Activated CD4-positive, alpha-beta T cell treated with anti-CD3 and anti-CD28 coated beads for 36 hours (primary cell): ENCODE measurements at regions of chr15 and their contacts with region 1.

Region 1: DNA sequence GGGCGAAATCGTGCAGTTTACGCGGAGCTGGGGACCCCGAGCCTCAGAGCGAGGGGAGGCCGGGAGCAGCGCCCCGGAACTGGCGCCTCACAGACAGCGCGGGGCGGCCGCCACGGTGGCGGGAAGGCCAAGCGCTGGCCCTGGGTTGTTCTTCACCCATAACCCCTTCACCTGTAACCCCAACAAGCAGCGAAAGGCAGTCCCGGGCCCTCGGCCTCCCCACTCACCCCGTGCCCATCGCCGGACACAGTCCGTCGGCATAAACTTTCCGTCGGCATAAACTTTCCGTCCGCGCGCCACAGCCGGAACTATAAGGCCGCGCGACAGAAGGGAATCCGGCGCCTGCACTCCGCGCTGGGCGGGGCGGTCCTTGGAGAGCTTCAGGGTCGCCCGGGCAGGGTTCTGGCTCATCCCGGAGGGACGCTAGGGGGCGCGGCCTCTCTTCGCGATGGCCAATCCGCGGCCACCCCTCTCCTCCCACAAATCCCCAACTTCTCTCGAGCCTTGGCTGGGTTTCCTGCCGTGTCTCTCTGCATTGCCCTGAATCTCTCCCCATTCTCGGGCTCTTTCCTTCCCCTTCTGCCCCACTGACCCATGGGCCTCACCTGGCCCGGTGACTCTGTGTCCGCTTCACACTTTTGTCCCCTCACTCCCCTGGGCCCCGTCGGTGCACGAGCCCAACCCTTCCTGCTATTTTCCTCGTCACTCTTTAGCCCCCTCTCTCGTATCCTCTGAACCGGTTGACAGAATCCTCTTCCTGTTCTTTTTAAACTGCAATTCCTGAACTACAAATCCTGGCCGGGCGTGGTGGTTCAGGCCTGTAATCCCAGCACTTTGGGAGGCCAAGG is at the start of gene INTS14:
- DNase-seq: peak; percentile 98
- ATAC-seq: peak; percentile 99
- H3K4me3 Mint-ChIP-seq: peak within 1 kb of the TSS; percentile 97
- H3K27ac Mint-ChIP-seq: peak within 1 kb of the TSS; percentile 96
- H3K4me1 Mint-ChIP-seq: peaks cover 33% of the 10 kb centered on the region
- H3K27me3 Mint-ChIP-seq: no peaks in the 10 kb centered on the region
- total RNA-seq, gene INTS14: 49.2 to 59.8 TPM

Region 2: GRCh38 chr15:65184868-65185738 is 426.0 kb before region 1 on chr15 and contains the start of gene CLPX:
- CTCF ChIA-PET with region 1: no interaction called
- POLR2A ChIA-PET with region 1: interaction called, 3 read pairs
- intact Hi-C with region 1: loop called in 1 of 2 experiments (anchors 1 kb)
- DNase-seq: peak; percentile 95
- ATAC-seq: peak; percentile 93
- H3K4me3 Mint-ChIP-seq: peak within 1 kb of the TSS; percentile 92
- H3K27ac Mint-ChIP-seq: peak within 1 kb of the TSS; percentile 89
- H3K4me1 Mint-ChIP-seq: peaks cover 28% of the 10 kb centered on the region
- H3K27me3 Mint-ChIP-seq: no peaks in the 10 kb centered on the region
- total RNA-seq, gene CLPX: 65.2 to 73.7 TPM

Region 3: GRCh38 chr15:65530314-65531122 is 80.6 kb before region 1 on chr15 and contains the start of gene HACD3:
- CTCF ChIA-PET with region 1: interaction called, 3 read pairs
- POLR2A ChIA-PET with region 1: no interaction called
- intact Hi-C with region 1: loop called in 1 of 2 experiments (anchors 1 kb)
- DNase-seq: peak; percentile 95
- ATAC-seq: peak; percentile 93
- H3K4me3 Mint-ChIP-seq: peak within 1 kb of the TSS; percentile 78
- H3K27ac Mint-ChIP-seq: peak within 1 kb of the TSS; percentile 91
- H3K4me1 Mint-ChIP-seq: peaks cover 32% of the 10 kb centered on the region
- H3K27me3 Mint-ChIP-seq: no peaks in the 10 kb centered on the region
- total RNA-seq, gene HACD3: 23.4 to 27.3 TPM

Region 4: DNA sequence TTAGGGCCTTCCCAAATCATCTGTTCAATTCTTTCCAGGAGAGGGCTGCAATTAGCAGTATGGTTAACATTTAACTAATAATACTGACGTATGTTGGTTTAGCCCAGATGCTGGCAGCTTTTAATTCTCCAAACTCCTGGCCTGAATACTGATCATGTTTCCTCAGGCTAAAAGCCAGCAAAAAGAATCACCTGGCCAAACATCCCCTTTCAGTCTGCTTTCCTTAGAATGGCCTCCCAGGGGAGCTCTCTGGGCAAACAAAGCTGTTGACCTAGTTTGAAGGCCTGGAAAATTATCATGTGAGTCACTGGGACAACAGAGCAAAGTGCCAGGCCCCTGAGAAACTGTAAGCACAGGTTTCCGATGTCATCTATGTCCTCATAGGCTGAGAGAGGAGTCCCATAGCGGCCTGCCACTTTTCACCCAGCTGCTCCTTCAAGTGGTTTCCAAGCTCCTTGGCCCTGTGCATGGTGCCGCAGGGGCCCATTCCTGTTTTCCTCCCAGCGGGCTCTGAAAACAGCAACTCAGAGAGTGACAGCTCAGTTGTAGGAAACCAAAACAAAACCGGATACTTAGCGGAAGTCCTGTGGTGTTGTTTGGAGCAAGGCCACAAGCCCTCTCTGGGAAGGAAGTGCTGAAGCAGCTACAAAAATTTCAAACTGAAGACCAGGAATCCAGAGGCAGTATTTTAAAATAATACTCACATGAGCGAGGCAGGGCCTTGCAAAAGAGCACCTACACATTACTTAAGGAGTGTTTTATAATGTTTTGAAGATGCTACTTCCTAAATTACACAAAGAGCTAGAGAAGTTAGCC is 221.7 kb after region 1 on chr15:
- CTCF ChIA-PET with region 1: interaction called, 5 read pairs
- POLR2A ChIA-PET with region 1: no interaction called
- intact Hi-C with region 1: loop called in 1 of 2 experiments (anchors 1 kb)
- DNase-seq: peak; percentile 67
- ATAC-seq: peak; percentile 62
- H3K4me3 Mint-ChIP-seq: peak overlapping the region; percentile 66
- H3K27ac Mint-ChIP-seq: peak overlapping the region; percentile 93
- H3K4me1 Mint-ChIP-seq: peaks cover 50% of the 10 kb centered on the region
- H3K27me3 Mint-ChIP-seq: no peaks in the 10 kb centered on the region

Region 5: GRCh38 chr15:65887565-65887964 is 276.5 kb after region 1 on chr15:
- CTCF ChIA-PET with region 1: no interaction called
- POLR2A ChIA-PET with region 1: no interaction called
- intact Hi-C with region 1: loop called in 1 of 2 experiments (anchors 1 kb)
- DNase-seq: peak; percentile 67
- ATAC-seq: peak; percentile 94
- H3K4me3 Mint-ChIP-seq: no peak overlapping the region
- H3K27ac Mint-ChIP-seq: peak overlapping the region; percentile 82
- H3K4me1 Mint-ChIP-seq: peaks cover 78% of the 10 kb centered on the region
- H3K27me3 Mint-ChIP-seq: no peaks in the 10 kb centered on the region

Region 6: GRCh38 chr15:66356345-66357236 is 745.5 kb after region 1 on chr15 and contains the start of gene TIPIN:
- CTCF ChIA-PET with region 1: no interaction called
- POLR2A ChIA-PET with region 1: no interaction called
- intact Hi-C with region 1: loop called in 1 of 2 experiments (anchors 5 kb)
- DNase-seq: peak; percentile 99
- ATAC-seq: peak; percentile 98
- H3K4me3 Mint-ChIP-seq: peak within 1 kb of the TSS; percentile 97
- H3K27ac Mint-ChIP-seq: peak within 1 kb of the TSS; percentile 99
- H3K4me1 Mint-ChIP-seq: peaks cover 24% of the 10 kb centered on the region
- H3K27me3 Mint-ChIP-seq: no peaks in the 10 kb centered on the region
- total RNA-seq, gene TIPIN: 49.9 to 50.8 TPM